AG04449 (cell line): ENCODE measurements at regions of chr2 and their contacts with region 1.

Region 1: DNA sequence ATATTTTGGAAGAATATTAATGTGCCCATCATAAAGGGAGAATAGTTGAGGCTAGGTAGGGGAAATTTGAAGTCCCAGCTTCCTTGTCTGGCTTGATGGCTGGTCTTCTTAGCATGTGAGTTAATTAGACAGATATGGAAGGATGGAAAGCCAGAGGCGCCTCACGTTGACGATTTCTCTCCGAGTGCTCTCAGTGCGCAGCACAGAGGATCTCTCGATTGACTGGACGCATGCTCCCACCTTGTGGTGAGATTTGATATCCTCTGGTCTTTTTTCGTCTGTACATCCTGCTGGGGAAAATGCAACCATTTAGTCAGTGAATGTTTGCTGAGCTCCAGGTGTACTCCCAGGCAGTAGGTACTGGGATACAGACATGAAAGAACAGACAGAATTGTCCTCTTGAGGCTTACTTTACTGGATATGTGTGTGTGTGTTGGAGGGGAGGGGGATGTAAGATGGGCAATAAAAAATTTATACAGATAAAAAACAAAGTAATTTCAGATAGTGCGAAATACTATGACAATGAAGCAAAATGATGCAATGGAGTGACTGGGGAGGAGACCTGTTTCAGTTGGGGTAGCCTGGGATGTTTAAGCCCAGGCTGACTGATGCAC is 66.9 kb upstream of the ZNG1B start:
- DNase-seq: peak; percentile 34
- H3K4me3 ChIP-seq: no peak overlapping the region
- CTCF ChIP-seq: peak; percentile 60

Region 2: DNA sequence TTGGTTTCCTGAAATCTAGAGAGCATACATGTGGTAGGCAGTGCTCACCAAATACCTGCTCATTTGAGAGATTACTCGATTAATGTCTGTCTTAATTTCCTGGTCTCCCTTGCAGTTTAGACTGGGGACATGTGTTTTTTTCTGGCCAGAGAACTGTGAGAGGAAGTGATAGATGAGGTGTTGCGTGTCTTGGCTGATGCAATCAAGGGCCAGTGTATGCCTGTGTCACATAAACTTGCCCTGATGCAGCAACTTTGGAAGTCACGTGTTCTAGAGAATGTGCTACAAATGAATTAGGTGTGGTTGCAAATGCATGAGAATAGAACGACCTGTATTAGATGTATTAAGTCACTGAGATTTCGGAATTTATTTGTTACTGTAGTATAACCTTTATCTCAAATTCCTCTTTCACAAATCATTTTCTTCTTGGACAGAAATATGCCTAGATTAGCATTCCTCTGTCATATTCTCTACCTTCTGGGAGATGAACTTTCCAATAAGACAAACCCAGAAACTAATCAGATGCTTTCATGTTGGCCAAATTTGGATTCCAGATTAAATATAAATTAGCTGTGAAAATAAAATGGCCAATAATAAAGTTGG is 576.4 kb before region 1 on chr2:
- CTCF ChIA-PET with region 1: no interaction called
- POLR2A ChIA-PET with region 1: no interaction called
- DNase-seq: no peak
- H3K4me3 ChIP-seq: no peak overlapping the region
- CTCF ChIP-seq: no peak

Region 3: DNA sequence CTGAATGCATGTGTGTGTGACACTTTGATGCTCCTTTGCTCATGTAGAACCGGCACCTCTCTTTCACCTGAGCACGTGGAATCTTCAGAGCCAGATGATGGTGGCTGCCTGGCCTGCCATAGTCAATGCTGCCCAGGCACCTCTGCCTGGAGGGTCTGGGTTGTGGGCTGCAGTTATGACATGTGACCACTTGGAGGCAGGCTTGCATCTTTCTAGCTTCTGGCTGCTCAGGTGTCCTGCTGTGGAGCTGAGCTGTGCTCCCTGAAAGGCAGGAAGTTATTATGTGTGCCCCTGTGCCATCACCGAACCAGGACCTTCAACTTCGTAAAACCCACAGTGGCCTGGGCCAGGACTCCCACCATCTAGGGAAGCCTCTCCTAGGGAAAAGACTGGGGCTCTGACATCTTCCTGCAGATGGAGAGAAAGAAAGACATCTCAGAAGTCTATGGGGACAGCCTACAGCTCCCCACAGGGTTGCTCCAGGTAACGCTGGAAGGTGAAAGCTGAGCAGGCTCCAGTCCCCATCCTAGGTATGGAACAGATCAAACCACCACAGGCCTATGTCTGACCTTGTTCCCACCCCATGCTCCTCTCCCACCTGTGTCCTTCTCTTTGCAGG is 166.6 kb before region 1 on chr2:
- CTCF ChIA-PET with region 1: interaction called, 198 read pairs
- POLR2A ChIA-PET with region 1: no interaction called
- DNase-seq: no peak
- H3K4me3 ChIP-seq: no peak overlapping the region
- CTCF ChIP-seq: peak; percentile 89

Region 4: GRCh38 chr2:113240150-113240862 is 130.3 kb before region 1 on chr2:
- CTCF ChIA-PET with region 1: interaction called, 152 read pairs
- POLR2A ChIA-PET with region 1: no interaction called
- DNase-seq: peak; percentile 58
- H3K4me3 ChIP-seq: peak overlapping the region; percentile 15; the same call in 1 of the 2 replicates
- CTCF ChIP-seq: no peak

Region 5: DNA sequence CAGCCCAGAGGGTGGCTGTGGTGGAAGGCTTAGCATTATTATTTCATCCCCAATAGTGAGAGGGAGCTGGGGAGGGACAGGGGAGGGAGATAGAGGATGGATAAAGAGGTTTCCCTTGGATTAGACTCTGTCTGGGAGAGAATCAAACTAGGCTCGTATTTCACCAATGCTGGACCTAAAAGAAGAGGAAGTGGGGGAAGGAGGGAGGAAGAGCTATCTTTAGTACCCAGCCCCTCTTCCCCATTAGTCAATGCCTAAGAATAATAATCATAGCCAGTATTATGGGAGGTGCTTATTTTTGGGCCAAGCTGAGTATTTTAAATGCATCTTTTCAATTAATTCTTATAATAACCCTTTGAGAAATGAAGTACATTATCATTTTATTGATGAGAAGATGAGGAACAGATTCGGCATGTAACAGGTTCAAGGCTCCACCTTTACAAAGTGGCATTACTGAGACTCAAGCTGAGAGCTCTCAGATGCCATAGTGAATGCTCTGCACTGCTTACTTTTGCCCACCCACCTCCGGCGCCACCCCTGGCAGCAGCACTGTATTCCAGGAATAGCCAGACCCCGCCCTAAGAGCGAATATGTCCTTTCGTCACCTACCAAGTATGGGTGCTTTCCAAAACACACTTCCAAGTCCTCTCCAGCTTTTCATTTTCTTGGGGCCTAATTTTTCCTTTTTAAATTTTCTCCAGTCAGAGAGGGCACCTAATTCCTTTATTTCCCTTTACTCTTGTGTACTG is 112.9 kb before region 1 on chr2:
- CTCF ChIA-PET with region 1: interaction called, 118 read pairs
- POLR2A ChIA-PET with region 1: no interaction called
- DNase-seq: no peak
- H3K4me3 ChIP-seq: no peak overlapping the region
- CTCF ChIP-seq: no peak

Region 6: DNA sequence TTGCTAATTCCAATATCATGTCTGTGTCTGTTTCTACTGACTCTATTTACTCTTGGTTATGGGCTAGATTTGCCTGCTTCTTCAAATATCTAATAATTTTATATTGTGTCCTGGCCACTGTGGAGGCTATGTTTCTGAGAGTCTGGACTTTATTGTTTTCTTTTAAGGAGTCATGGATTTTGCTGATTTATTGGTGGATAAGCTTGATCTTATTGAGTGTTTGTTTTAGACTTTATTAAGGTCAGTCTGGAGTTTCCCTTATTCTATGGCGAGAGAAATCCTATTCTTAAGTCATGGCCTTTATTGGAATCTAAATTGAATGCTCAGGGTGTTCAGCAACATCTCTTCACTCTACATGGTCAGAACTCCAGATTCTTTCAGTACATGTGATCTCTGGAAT is 11.9 kb after region 1 on chr2:
- CTCF ChIA-PET with region 1: interaction called, 22 read pairs
- POLR2A ChIA-PET with region 1: no interaction called
- DNase-seq: no peak
- H3K4me3 ChIP-seq: no peak overlapping the region
- CTCF ChIP-seq: no peak

Region 7: DNA sequence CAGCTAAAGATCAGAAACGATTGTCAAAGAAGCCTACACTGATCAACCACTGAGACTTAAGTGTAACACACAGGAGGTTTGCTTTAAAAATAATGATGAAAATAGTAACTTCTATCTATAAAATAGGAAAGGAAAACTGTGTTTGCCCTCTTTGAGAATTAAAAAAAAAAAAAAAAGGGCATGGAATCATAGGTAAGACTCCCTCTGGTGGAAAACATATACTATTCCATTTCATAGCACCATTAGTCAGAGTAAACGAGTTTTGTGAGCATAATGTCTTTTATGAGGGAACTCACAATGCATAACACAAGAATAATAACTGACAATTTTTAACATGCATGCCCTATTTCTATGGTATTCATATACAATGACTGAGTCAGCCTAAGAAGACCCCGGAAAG is 349.6 kb after region 1 on chr2:
- CTCF ChIA-PET with region 1: no interaction called
- POLR2A ChIA-PET with region 1: no interaction called
- DNase-seq: no peak
- H3K4me3 ChIP-seq: no peak overlapping the region
- CTCF ChIP-seq: peak; percentile 27

Region 8: GRCh38 chr2:114316532-114317300 is 946.1 kb after region 1 on chr2:
- CTCF ChIA-PET with region 1: no interaction called
- POLR2A ChIA-PET with region 1: no interaction called
- DNase-seq: no peak
- H3K4me3 ChIP-seq: no peak overlapping the region
- CTCF ChIP-seq: no peak